ENCODE measurements at regions of chr17 and their contacts with region 1.

Region 1: DNA sequence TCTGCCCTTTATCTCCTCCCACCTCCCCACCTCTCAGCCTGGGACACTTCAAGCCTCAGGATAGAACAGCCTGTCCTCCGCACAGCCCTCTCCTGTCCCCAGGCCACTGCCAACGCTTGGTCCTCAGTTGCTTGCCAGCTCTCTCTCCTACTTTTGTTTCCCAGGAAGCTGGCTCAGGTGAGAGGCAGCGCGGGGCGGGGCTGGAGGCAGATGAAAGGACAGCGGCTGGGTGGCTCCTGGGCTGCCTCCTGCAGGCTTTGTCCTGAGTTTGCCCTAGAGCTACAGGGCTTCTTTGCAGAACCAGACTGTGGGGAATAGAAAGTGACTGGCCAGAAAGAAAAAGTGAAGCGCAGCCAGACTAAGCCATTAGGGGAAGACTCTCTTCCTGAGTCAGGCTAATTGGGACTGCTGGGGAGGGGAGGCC is 48.2 kb upstream of the CDC42EP4 start:
- DNase-seq: peak; percentile 63
- H3K4me3 ChIP-seq: no peak overlapping the region
- H3K27ac ChIP-seq: no peak overlapping the region
- H3K4me1 ChIP-seq: peaks cover 0 to 59% of the 10 kb centered on the region in 2 experiments; a peak in 1 of 4 replicates
- H3K27me3 ChIP-seq: 0 out of 2 replicates have a peak, but pooled peaks cover 7% of the 10 kb centered on the region
- CTCF ChIP-seq: no peak
- EP300 ChIP-seq: no peak
- RAD21 ChIP-seq: no peak

Region 2: GRCh38 chr17:73325527-73325842 is 34.5 kb before region 1 on chr17:
- CTCF ChIA-PET with region 1: no interaction called
- POLR2A ChIA-PET with region 1: no interaction called
- DNase-seq: no peak
- H3K4me3 ChIP-seq: no peak overlapping the region
- H3K27ac ChIP-seq: no peak overlapping the region
- H3K4me1 ChIP-seq: peaks cover 0 to 22% of the 10 kb centered on the region in 2 experiments; a peak in 1 of 4 replicates
- H3K27me3 ChIP-seq: no peaks in the 10 kb centered on the region
- CTCF ChIP-seq: no peak
- EP300 ChIP-seq: no peak
- RAD21 ChIP-seq: no peak

Region 3: GRCh38 chr17:73342050-73342522 is 17.9 kb before region 1 on chr17:
- CTCF ChIA-PET with region 1: interaction called, 49 read pairs
- POLR2A ChIA-PET with region 1: interaction called, 26 read pairs
- DNase-seq: peak; percentile 69
- H3K4me3 ChIP-seq: no peak overlapping the region
- H3K27ac ChIP-seq: peak overlapping the region; percentile 70 to 92
- H3K4me1 ChIP-seq: peaks cover 23 to 42% of the 10 kb centered on the region in 2 experiments
- H3K27me3 ChIP-seq: no peaks in the 10 kb centered on the region
- CTCF ChIP-seq: no peak
- EP300 ChIP-seq: peak in 1 of 2 experiments; percentile 9; a peak in 1 of 4 replicates
- RAD21 ChIP-seq: no peak

Region 4: GRCh38 chr17:73347351-73347750 is 12.6 kb before region 1 on chr17:
- CTCF ChIA-PET with region 1: interaction called, 49 read pairs
- POLR2A ChIA-PET with region 1: interaction called, 26 read pairs
- DNase-seq: no peak
- H3K4me3 ChIP-seq: no peak overlapping the region
- H3K27ac ChIP-seq: no peak overlapping the region
- H3K4me1 ChIP-seq: peaks cover 16 to 42% of the 10 kb centered on the region in 2 experiments
- H3K27me3 ChIP-seq: no peaks in the 10 kb centered on the region
- CTCF ChIP-seq: no peak
- EP300 ChIP-seq: no peak
- RAD21 ChIP-seq: no peak

Measured in SK-N-SH (cell line).